A673 (cell line): ENCODE measurements at regions of chr1 and their contacts with region 1.

Region 1: GRCh38 chr1:97050501-97050900 is 328.9 kb downstream of the PTBP2 start:
- DNase-seq: peak; percentile 91
- H3K4me3 ChIP-seq: no peak overlapping the region
- H3K27ac ChIP-seq: peak overlapping the region; percentile 49
- H3K4me1 ChIP-seq: peaks cover 37% of the 10 kb centered on the region
- H3K27me3 ChIP-seq: no peaks in the 10 kb centered on the region
- CTCF ChIP-seq: peak; percentile 79

Region 2: GRCh38 chr1:96845464-96845863 is 205.0 kb before region 1 on chr1:
- CTCF ChIA-PET with region 1: no interaction called
- POLR2A ChIA-PET with region 1: no interaction called
- intact Hi-C with region 1: loop called (anchors 10 kb)
- DNase-seq: peak; percentile 53
- H3K4me3 ChIP-seq: no peak overlapping the region
- H3K27ac ChIP-seq: no peak overlapping the region
- H3K4me1 ChIP-seq: no peaks in the 10 kb centered on the region
- H3K27me3 ChIP-seq: no peaks in the 10 kb centered on the region
- CTCF ChIP-seq: peak; percentile 76

Region 3: DNA sequence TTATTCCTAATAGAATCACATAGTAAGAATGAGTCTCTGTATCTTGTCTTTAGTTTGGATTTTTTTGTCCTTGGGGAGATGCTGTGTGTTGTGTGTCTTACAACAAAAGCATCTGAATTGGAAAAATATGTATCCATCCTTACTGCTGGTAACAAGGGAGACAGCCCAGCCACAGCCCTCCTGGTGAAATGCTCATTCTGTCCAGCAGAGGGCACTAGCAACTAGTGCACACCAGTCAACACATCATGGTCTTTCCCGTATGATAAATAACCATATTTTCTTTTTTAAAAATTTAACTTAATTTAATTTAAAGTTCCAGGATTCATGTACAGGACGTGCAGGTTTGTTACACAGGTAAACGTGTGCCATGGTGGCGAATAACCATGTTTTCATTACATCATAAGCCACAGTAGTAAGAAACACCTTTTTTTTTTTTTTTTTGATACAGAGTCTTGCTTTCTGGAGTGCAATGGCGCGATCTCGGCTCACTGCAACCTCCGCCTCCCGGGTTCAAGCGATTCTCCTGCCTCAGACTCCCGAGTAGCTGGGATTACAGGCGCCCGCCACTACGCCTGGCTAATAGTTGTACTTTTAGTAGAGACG is 83.9 kb before region 1 on chr1:
- CTCF ChIA-PET with region 1: interaction called, 4 read pairs
- POLR2A ChIA-PET with region 1: no interaction called
- intact Hi-C with region 1: loop called (anchors 1 kb)
- DNase-seq: peak; percentile 86
- H3K4me3 ChIP-seq: no peak overlapping the region
- H3K27ac ChIP-seq: peak overlapping the region; percentile 58
- H3K4me1 ChIP-seq: peaks cover 20% of the 10 kb centered on the region
- H3K27me3 ChIP-seq: no peaks in the 10 kb centered on the region
- CTCF ChIP-seq: peak; percentile 95

Region 4: DNA sequence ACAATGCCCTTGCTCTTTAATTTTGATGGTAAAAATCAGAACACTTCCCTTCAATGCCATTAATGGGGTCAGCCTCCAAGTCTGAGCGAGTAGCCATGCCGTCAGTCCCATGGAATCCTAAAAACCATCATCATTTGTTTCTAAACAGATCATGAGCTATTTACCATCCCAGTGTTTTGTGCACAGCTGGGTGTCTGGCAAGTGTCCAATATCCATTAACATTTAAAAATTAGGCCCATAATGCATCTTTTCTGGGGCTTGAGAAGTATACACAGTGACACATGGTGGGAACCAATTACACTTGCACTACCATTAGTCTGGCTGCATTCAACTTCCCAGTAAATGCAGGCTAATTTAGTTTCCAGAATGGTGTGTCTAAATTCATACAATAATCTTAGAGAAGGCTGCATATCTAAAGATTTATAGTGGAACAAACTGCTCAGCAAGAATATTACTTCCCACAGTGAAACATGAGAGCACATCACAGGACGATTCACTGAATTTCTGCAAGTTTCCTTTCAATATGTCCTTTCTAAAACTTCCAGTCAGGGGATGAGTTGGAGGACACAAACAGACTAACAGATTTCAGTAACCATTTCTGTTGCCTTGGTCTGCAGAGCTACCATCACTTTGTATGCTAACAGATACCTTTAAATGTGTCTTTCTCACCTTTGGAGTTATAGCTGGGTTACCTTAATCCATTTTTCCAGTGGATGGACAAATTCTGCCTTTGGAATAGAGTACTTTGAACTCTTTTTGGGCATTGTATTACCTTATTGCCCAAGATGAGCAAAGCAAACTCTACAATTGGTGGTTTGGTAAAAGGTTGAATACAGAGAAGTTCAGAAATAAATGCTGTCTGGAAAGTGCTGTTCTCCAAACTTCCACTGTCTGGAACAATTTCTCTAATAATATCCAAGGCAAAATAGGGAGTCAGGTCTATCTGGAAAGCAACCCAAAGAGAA is 70.9 kb before region 1 on chr1:
- CTCF ChIA-PET with region 1: interaction called, 14 read pairs
- POLR2A ChIA-PET with region 1: interaction called, 4 read pairs
- intact Hi-C with region 1: loop called (anchors 5 kb)
- DNase-seq: peak; percentile 92
- H3K4me3 ChIP-seq: no peak overlapping the region
- H3K27ac ChIP-seq: peak overlapping the region; percentile 93
- H3K4me1 ChIP-seq: peaks cover 60% of the 10 kb centered on the region
- H3K27me3 ChIP-seq: no peaks in the 10 kb centered on the region
- CTCF ChIP-seq: no peak

Region 5: DNA sequence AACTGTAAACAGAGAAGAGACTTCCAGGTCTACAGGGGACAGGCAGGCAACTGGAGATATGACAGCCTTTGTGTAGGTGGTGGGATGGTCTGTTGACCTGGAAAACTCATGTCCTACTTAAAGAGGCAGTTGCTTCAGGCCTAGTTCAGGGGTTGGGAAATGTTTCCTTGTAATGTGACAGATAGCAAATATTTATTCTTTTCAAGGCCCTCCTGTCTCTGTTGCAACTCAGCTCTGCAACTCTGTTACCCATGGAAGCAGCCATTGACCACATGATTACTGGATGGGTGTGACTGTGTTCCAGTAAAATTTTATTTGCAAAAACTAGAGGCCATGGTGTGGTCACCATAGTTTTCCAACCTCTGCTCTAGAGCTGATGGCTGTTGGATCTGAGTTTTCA is 13.0 kb after region 1 on chr1:
- CTCF ChIA-PET with region 1: no interaction called
- POLR2A ChIA-PET with region 1: interaction called, 13 read pairs
- intact Hi-C with region 1: no loop called
- DNase-seq: no peak
- H3K4me3 ChIP-seq: no peak overlapping the region
- H3K27ac ChIP-seq: no peak overlapping the region
- H3K4me1 ChIP-seq: no peaks in the 10 kb centered on the region
- H3K27me3 ChIP-seq: no peaks in the 10 kb centered on the region
- CTCF ChIP-seq: no peak

Region 6: GRCh38 chr1:97270508-97271307 is 220.2 kb after region 1 on chr1:
- CTCF ChIA-PET with region 1: no interaction called
- POLR2A ChIA-PET with region 1: no interaction called
- intact Hi-C with region 1: no loop called
- DNase-seq: no peak
- H3K4me3 ChIP-seq: no peak overlapping the region
- H3K27ac ChIP-seq: no peak overlapping the region
- H3K4me1 ChIP-seq: no peaks in the 10 kb centered on the region
- H3K27me3 ChIP-seq: no peaks in the 10 kb centered on the region
- CTCF ChIP-seq: no peak

Region 7: GRCh38 chr1:97920832-97921571 is 870.5 kb after region 1 on chr1 and contains the start of gene DPYD:
- CTCF ChIA-PET with region 1: no interaction called
- POLR2A ChIA-PET with region 1: no interaction called
- intact Hi-C with region 1: no loop called
- DNase-seq: peak; percentile 96
- H3K4me3 ChIP-seq: peak within 1 kb of the TSS; percentile 84
- H3K27ac ChIP-seq: peak within 1 kb of the TSS; percentile 67
- H3K4me1 ChIP-seq: peaks cover 20% of the 10 kb centered on the region
- H3K27me3 ChIP-seq: no peaks in the 10 kb centered on the region
- CTCF ChIP-seq: no peak
- total RNA-seq, gene DPYD: 10.8 and 13.4 TPM in 2 replicates